ENCODE measurements at regions of chr2 and their contacts with region 1.

Region 1: GRCh38 chr2:106261871-106262321 is 67.8 kb upstream of the UXS1 start:
- DNase-seq: no peak
- ATAC-seq: peak in 1 of 4 donors; percentile 37
- H3K4me3 ChIP-seq: no peak overlapping the region
- H3K27ac ChIP-seq: no peak overlapping the region
- H3K4me1 ChIP-seq: no peaks in the 10 kb centered on the region
- H3K27me3 ChIP-seq: no peaks in the 10 kb centered on the region
- CTCF ChIP-seq: no peak
- POLR2A ChIP-seq: no peak

Region 2: DNA sequence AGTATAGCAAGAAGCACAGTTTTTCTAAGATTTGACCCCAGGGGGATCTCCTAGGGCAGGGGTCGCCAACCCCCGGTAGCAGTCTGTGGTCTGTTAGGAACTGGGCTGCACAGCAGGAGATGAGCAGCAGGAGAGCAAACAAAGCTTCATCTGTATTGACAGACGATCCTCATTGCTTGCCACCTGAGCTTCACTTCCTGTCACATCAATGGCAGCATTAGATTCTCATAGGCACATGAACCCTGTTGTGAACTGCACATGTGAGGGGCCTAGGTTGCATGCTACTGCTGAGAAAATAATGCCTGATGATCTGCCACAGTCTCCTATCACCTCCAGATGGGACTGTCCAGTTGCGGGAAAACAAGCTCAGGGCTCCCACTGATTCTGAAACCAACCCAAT is 70.2 kb after region 1 on chr2:
- intact Hi-C with region 1: loop called in 1 of 10 experiments (anchors 2 kb)
- DNase-seq: no peak
- ATAC-seq: no peak
- H3K4me3 ChIP-seq: no peak overlapping the region
- H3K27ac ChIP-seq: no peak overlapping the region
- H3K4me1 ChIP-seq: peaks cover 0 to 25% (median 0%) of the 10 kb centered on the region in 12 donors
- H3K27me3 ChIP-seq: no peaks in the 10 kb centered on the region
- CTCF ChIP-seq: no peak
- POLR2A ChIP-seq: no peak

Measured in heart left ventricle (tissue), 16 donors.